HEK293 (cell line): ENCODE measurements at regions of chr6 and their contacts with region 1.

Region 1: DNA sequence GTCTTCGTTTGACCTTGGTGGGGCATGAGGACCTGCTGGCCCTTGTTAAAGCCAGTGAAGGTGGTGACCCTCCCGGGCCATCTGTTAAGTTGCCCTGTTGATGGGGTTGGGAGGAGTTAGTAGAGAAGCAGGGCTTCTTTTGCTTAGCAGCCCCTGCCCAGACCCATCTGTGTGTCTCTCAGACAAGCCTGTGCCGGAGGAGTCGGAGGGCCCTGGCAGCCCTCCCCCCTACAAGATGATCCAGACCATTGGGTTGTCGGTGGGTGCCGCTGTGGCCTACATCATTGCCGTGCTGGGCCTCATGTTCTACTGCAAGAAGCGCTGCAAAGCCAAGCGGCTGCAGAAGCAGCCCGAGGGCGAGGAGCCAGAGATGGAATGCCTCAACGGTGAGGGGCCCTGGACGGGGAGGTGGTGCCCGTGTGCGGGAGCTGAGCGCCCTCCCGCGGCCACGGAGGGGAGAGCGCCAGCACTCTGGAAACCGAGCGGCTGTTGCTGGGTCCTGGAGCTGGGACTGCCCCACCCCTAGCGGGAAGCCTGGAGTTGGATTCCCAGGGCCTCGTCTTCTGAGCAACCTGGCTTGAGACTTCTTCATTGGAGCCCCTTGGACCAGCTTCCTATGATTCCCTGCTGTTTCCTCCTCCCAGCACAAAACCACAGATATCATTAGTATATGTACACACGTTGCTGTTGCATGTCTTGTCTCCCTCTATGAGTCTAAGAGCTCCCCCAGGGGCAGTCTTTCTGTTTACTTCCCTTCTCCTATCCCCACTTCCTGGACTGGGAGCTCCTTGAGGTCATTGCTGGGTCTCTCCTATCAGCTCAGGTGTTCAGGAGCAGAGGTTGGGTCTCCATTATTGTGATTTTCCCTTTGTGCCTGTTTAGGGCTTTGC is 27.6 kb upstream of the SRF start:
- H3K4me3 ChIP-seq: no peak overlapping the region
- H3K27ac ChIP-seq: no peak overlapping the region
- H3K4me1 ChIP-seq: no peaks in the 10 kb centered on the region
- CTCF ChIP-seq: peak; percentile 99

Region 2: DNA sequence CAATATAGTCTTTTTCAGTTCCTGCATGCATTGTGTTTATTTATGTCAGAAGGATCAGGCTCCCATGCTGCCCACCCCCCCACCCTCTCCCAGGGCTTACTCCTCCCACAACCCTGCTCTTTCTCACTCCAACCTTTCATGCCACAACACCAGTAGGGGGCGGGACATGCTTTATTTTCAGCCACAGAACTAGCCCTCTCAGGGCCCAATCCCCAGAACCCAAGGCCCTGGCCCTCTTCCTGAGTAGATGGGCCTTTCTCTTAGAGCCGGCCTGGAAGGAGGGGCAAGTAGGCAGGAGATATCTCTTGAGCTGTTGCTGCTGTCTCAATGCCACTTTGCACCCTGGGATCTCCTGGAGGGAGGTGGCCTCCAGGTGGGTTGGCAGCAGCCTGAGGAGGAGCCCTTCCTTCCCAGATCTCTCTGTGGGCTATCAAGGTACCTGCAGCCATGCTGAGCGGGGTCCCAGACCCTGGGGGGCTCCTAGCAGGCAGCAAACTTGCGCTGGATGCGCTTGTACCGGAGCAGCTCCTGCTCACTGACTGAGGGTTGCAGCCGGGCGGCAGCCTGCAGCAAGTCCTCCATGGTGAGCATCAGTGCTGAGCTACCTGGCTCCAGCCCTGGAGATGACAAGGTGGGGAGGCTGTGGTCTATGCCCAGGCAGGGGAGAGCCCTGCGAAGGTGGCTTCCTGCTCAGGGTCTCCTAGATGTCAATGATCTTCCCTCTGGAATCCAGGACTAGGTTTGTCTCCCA is 179.4 kb before region 1 on chr6:
- CTCF ChIA-PET with region 1: interaction called, 24 read pairs
- POLR2A ChIA-PET with region 1: no interaction called
- H3K4me3 ChIP-seq: no peak overlapping the region
- H3K27ac ChIP-seq: no peak overlapping the region; the same call in 1 of the 2 replicates
- H3K4me1 ChIP-seq: 0 out of 2 replicates have a peak, but pooled peaks cover 4% of the 10 kb centered on the region
- CTCF ChIP-seq: 0 out of 2 replicates have a peak, but pooled peaks have one; percentile 15

Region 3: DNA sequence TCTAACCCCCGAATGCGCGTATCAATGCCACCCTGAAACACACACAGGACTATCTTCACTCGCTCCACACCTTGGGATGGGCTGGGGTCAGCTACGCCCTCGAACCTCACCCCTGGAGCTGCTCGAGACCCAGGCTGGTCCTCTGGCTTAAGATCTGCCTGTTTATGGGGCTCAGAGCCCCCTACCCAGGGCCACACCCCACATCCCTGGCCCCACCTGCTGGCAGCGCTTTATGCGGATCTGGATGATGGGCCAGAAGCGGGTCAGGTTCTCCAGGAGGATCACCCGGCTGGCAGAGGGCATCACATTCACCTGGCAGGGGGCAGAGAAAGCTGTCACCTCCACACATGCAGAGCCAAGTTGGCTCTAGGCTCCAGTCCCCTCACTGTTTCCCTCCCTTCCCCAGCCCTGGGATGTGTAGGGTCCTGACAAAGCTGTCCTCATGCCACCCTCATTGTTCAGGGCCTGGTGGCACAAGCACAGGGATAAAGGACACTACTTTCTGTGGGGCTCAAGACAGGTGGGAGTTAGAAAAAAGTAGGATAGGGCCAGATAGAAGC is 98.0 kb before region 1 on chr6:
- CTCF ChIA-PET with region 1: interaction called, 16 read pairs
- POLR2A ChIA-PET with region 1: no interaction called
- H3K4me3 ChIP-seq: no peak overlapping the region
- H3K27ac ChIP-seq: no peak overlapping the region
- H3K4me1 ChIP-seq: no peaks in the 10 kb centered on the region
- CTCF ChIP-seq: no peak

Region 4: DNA sequence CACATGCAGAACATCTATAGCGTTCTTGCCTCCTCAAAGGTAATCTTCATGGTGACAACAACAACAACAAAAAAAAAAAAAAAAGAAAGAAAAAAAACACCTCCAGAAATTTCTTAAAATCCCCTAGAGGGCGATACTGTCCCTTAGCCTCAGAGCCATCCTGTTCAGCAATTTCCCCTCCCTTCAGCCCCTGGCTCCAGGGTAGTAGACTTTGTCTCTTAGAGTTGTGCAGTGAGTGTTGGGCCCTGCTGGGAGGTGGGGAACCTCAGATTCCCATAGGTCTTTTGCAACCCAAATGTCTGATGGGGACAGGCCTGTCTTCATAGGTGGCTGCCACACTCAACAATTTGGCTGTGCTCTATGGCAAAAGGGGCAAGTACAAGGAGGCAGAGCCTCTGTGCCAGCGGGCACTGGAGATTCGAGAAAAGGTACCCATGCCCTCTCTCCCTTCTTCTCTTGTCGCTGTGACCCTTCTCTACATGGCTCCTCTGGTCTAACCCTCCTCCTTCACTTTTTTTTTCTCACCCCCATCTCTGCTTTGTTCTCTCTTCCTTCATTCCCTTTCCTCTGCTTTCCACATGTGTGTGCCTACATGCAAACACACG is 73.3 kb before region 1 on chr6:
- CTCF ChIA-PET with region 1: interaction called, 83 read pairs
- POLR2A ChIA-PET with region 1: interaction called, 18 read pairs
- H3K4me3 ChIP-seq: no peak overlapping the region
- H3K27ac ChIP-seq: no peak overlapping the region
- H3K4me1 ChIP-seq: no peaks in the 10 kb centered on the region
- CTCF ChIP-seq: peak; percentile 73

Region 5: GRCh38 chr6:43120944-43121913 is 22.3 kb before region 1 on chr6:
- CTCF ChIA-PET with region 1: interaction called, 16 read pairs
- POLR2A ChIA-PET with region 1: no interaction called
- H3K4me3 ChIP-seq: no peak overlapping the region
- H3K27ac ChIP-seq: no peak overlapping the region
- H3K4me1 ChIP-seq: peaks cover 6% of the 10 kb centered on the region
- CTCF ChIP-seq: no peak